ENCODE measurements at regions of chr5 and their contacts with region 1.

Region 1: GRCh38 chr5:64634997-64635686 is 55.2 kb upstream of the SHISAL2B start:
- DNase-seq: peak; percentile 8
- H3K4me3 ChIP-seq: no peak overlapping the region; a peak in 1 of 4 replicates
- H3K27ac ChIP-seq: no peak overlapping the region
- H3K4me1 ChIP-seq: no peaks in the 10 kb centered on the region; a peak in 1 of 4 replicates
- H3K27me3 ChIP-seq: peaks cover 14% of the 10 kb centered on the region; the same call in 1 of the 2 replicates
- CTCF ChIP-seq: peak; percentile 88
- EP300 ChIP-seq: no peak
- RAD21 ChIP-seq: peak; percentile 80

Region 2: DNA sequence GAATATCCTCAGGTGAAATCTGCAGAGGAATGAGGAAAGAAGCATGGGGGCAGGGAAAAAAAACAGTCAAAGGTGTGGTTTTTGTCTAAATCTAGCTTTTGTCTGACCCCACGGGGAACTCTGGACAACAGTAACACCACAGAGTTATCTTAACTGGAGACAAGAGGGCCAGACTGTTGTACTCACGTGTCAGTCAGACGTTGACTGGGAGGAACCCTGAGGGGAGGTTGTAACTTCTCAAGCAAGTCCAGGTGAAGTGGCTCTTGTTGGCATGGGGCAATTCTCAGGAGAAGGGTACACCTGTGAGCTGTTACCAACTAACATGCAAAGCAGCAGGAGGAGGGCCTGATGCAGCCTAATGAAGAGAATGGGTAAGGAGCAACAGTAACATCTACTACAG is 11.0 kb after region 1 on chr5:
- CTCF ChIA-PET with region 1: interaction called, 17 read pairs
- POLR2A ChIA-PET with region 1: no interaction called
- DNase-seq: no peak
- H3K4me3 ChIP-seq: no peak overlapping the region
- H3K27ac ChIP-seq: no peak overlapping the region
- H3K4me1 ChIP-seq: no peaks in the 10 kb centered on the region
- H3K27me3 ChIP-seq: no peaks in the 10 kb centered on the region; the same call in 1 of the 2 replicates
- CTCF ChIP-seq: no peak
- EP300 ChIP-seq: no peak
- RAD21 ChIP-seq: no peak

Region 3: DNA sequence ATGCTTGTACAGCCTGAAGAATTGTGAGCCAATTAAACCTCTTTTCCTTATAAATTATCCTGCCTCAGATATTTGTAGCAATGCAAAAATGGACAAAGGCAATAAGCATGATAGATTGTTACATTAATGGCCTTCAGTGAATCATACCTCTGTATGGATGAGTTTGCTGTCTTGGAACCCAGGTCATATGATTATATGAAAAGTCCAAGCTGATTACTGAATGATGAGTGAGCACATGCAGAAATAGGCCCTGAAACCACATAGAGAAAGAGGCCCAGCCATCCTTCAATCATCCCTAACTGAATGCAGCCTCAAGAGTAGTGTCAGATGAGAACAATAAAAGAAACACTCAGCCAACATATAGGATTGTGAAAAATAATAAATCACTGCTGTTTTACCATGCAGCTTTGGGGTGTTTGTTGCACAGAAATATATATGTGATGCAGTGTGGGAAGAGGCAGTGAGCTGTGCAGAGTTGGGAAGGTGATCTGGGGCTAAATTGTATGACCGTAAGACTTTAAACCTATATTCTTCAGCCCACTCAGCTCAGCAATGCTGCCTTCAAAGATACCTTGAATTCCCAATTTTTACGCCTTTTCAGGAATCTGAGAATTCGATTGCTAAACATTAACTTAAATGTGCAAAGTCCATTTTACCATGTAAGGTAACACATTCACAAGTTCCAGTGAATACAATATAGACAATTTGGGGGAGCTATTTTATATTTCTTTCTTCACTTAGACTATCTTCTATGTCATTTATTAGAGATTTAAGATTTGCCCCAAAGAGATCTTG is 18.8 kb after region 1 on chr5:
- CTCF ChIA-PET with region 1: interaction called, 15 read pairs
- POLR2A ChIA-PET with region 1: no interaction called
- DNase-seq: no peak
- H3K4me3 ChIP-seq: no peak overlapping the region
- H3K27ac ChIP-seq: no peak overlapping the region
- H3K4me1 ChIP-seq: no peaks in the 10 kb centered on the region
- H3K27me3 ChIP-seq: peaks cover 9% of the 10 kb centered on the region; the same call in 1 of the 2 replicates
- CTCF ChIP-seq: no peak
- EP300 ChIP-seq: no peak
- RAD21 ChIP-seq: no peak